ENCODE measurements at regions of chr16 and their contacts with region 1.

Region 1: DNA sequence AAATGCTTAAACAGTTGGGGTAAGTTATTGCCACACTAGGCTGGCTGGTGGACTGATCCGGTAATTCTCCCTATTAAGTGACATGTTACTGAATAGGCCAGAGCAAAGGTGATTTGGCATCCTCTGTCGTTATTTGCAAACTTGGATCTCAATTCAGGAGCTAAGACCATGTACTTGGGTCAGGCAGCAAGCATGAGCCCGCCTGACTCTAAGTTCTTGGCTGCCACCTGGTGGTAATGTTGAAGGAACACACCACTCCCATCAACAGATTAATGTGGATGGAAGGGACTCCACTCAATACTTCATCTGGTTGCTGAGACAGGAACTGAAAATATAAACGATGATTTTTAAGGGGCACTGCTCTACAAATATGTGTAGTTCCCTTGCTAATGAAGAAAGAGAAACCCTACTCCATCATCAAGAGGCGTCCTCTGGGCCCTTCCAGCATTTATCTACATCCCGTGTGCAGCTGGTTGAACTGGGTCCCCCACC is 70.8 kb downstream of the EMP2 start:
- DNase-seq: peak; percentile 80
- CTCF ChIP-seq: peak; percentile 73

Region 2: GRCh38 chr16:10314811-10315210 is 194.8 kb before region 1 on chr16:
- CTCF ChIA-PET with region 1: interaction called, 27 read pairs
- POLR2A ChIA-PET with region 1: no interaction called
- DNase-seq: no peak
- CTCF ChIP-seq: no peak

Region 3: GRCh38 chr16:10521681-10522274 is 12.2 kb after region 1 on chr16:
- CTCF ChIA-PET with region 1: interaction called, 11 read pairs
- POLR2A ChIA-PET with region 1: no interaction called
- DNase-seq: peak; percentile 67
- CTCF ChIP-seq: peak; percentile 60

Region 4: GRCh38 chr16:10737068-10737625 is 227.6 kb after region 1 on chr16:
- CTCF ChIA-PET with region 1: interaction called, 101 read pairs
- POLR2A ChIA-PET with region 1: interaction called, 4 read pairs
- DNase-seq: peak; percentile 81
- CTCF ChIP-seq: peak; percentile 84

Measured in GM10248 (cell line).